ENCODE measurements at regions of chr11 and their contacts with region 1.

Region 1: DNA sequence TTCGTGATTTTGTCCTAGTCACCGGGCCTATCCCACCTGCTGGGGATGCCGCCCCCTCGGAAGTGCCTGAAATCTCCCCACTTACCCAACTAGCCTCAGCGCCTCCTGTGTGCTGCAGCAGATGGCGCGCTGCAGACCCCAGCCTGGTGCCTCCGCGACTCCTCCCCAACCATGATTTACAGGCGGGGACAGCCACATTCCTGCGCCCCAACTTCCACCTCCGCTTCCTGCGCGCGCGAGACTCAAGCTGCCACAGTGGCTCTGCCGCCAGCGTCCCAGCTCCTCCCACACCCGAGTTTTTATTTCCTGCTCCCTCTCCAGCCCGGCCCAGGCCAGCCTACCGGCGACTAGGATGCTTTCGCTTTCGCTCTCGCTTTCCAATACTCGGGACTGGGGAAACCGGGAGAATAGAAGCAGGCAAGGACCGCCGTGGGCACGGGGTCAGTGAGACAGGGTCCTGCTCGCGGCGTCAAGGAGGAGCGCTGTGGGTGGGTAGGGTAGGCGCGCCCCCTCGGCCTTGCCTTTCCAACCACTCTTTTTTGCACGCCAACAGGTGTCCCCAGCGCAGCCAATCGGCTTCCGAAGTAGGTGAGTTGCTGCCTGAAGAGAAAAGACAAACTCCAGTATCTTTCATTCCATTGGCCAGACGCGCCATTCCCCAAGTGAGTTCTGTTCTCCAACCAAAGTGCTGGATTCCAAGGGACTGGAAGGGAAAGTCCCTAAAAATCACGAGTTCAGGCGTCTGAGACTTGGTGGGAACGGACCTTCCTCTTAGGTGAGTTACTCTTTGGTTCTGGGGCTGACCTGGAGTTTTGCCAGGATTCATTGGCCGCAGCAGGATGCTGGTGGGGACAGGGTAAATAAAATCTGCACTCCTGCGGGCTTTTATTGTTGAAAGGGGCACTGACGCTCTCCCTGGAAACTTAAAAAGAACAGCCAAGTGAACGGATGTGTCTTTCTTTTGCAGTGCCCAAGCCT is at the start of gene FAM111A:
- DNase-seq: peak; percentile 64 to 74
- ATAC-seq: peak; percentile 85 to 88
- H3K4me3 ChIP-seq: peak within 1 kb of the TSS; percentile 68 to 90 (median 80)
- H3K27ac ChIP-seq: peak within 1 kb of the TSS; percentile 70 to 82 (median 80)
- H3K4me1 ChIP-seq: peaks cover 7 to 12% of the 10 kb centered on the region in 2 donors
- H3K27me3 ChIP-seq: no peaks in the 10 kb centered on the region
- CTCF ChIP-seq: no peak
- POLR2A ChIP-seq: peak in 1 of 2 donors; percentile 41
- total RNA-seq, gene FAM111A: 2.0 to 7.0 (median 3.7) TPM

Region 2: GRCh38 chr11:58567889-58568512 is 574.8 kb before region 1 on chr11:
- in situ Hi-C with region 1: loop called in 1 of 4 experiments (anchors 25 kb)
- intact Hi-C with region 1: no loop called
- DNase-seq: peak in 1 of 2 donors; percentile 23
- ATAC-seq: peak in 1 of 2 donors; percentile 82
- H3K4me3 ChIP-seq: no peak overlapping the region
- H3K27ac ChIP-seq: no peak overlapping the region
- H3K4me1 ChIP-seq: peaks cover 0 to 2% of the 10 kb centered on the region in 2 donors
- H3K27me3 ChIP-seq: no peaks in the 10 kb centered on the region
- CTCF ChIP-seq: peak; percentile 38 to 74 (median 57)
- POLR2A ChIP-seq: no peak

Region 3: GRCh38 chr11:58629857-58630256 is 513.0 kb before region 1 on chr11:
- in situ Hi-C with region 1: loop called in 1 of 4 experiments (anchors 25 kb)
- intact Hi-C with region 1: no loop called
- DNase-seq: no peak
- ATAC-seq: peak in 1 of 2 donors; percentile 37
- H3K4me3 ChIP-seq: no peak overlapping the region
- H3K27ac ChIP-seq: no peak overlapping the region
- H3K4me1 ChIP-seq: peaks cover 30 to 42% of the 10 kb centered on the region in 2 donors
- H3K27me3 ChIP-seq: no peaks in the 10 kb centered on the region
- CTCF ChIP-seq: peak in 4 of 5 experiments; percentile 25 to 49 (median 34)
- POLR2A ChIP-seq: no peak

Region 4: DNA sequence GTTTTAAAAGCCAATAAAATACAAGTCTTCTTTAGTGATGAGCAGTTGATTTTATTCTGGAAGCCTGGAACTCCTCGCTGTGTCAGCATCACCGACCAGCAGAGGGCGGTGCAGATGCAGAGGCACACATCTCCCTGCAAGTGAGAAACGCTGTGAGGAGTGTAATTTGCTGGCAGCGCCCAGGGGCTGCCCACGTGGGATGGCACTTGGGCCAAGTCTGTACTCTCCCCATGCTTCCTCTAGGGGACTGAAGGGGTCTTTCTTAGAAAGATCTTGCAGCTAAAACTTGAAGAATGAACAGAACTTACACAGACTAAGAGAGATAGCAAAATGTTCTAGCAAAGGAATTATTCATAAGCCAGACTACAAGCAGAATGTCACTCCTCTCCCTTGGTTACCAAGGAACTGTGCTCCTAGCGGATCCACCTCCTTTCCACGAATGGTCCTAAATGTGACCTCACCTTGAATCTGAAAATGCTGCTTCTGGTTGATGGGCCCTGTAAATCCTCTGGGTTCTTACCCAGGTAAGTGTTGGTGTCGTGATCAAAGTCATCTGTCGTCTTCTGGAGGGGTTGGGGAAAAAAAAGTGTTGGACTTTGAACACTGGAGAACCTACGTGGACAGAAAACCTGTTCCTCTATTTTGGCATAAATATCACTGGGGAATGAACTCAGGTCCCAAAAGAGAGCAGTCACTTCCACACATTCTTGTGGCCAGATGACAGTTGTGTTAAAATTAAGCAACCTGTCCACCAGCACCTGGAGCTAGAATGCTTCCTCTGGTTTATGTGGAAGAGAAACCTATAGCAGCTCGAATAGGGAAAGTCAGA is 488.5 kb before region 1 on chr11:
- in situ Hi-C with region 1: loop called in 3 of 4 experiments (anchors 25 kb)
- intact Hi-C with region 1: no loop called
- DNase-seq: peak; percentile 12 to 56
- ATAC-seq: peak; percentile 61 to 63
- H3K4me3 ChIP-seq: no peak overlapping the region
- H3K27ac ChIP-seq: no peak overlapping the region
- H3K4me1 ChIP-seq: no peaks in the 10 kb centered on the region
- H3K27me3 ChIP-seq: no peaks in the 10 kb centered on the region
- CTCF ChIP-seq: peak; percentile 52 to 82 (median 65)
- POLR2A ChIP-seq: no peak

Region 5: DNA sequence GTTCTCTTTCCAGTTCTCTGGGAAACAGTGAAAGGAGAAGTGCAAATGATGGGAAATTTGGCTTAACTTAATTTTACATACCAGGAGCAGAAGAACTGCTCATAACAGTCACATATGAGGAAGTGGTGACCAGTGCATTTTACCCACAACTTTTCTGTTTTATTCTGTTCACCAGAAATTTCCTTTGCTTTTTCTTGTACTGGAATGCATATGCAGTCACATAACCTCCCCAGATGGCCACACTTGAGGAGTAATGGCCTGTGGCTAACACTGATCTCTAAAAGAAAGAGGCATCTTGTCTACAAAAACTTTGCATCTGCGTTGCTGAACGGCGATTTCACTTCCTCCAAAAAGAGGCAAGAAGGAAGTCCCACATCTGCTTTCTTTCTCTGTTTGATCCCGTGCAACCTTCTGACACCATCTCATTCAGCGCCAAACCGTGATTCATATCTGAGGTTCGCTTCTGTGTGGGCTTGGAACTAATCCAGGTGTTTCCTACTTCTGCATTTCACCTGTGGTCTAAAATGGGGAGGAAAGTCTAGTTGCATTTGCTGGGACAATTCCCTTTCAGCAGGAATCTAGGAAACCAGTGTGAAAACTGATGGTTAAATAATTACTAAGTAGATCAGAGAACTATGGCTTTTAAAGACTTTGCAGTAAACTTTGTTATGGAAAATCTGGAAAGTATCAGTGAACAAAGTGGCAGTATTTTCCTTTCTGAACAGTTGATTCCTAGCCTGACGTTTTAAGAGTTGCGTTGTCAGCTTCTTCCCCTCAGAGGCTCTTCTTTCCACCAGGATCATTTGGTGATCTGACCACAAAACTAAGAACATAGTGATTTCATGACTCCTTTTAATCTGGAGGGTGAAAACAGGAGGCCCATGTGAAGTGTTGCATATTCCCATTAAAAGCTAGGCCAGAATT is 74.1 kb after region 1 on chr11:
- in situ Hi-C with region 1: no loop called
- intact Hi-C with region 1: no loop called
- DNase-seq: peak; percentile 23 to 47
- ATAC-seq: peak; percentile 55 to 61
- H3K4me3 ChIP-seq: no peak overlapping the region
- H3K27ac ChIP-seq: peak overlapping the region in 3 of 4 donors; percentile 2 to 34 (median 20)
- H3K4me1 ChIP-seq: peaks cover 0 to 10% of the 10 kb centered on the region in 2 donors
- H3K27me3 ChIP-seq: no peaks in the 10 kb centered on the region
- CTCF ChIP-seq: no peak
- POLR2A ChIP-seq: no peak

Region 6: GRCh38 chr11:59292611-59293010 is 149.8 kb after region 1 on chr11:
- in situ Hi-C with region 1: no loop called
- intact Hi-C with region 1: no loop called
- DNase-seq: no peak
- ATAC-seq: no peak
- H3K4me3 ChIP-seq: no peak overlapping the region
- H3K27ac ChIP-seq: no peak overlapping the region
- H3K4me1 ChIP-seq: no peaks in the 10 kb centered on the region
- H3K27me3 ChIP-seq: no peaks in the 10 kb centered on the region
- CTCF ChIP-seq: no peak
- POLR2A ChIP-seq: no peak

Region 7: GRCh38 chr11:59545179-59546020 is 402.6 kb after region 1 on chr11:
- in situ Hi-C with region 1: no loop called
- intact Hi-C with region 1: loop called (anchors 10 kb)
- DNase-seq: no peak
- ATAC-seq: no peak
- H3K4me3 ChIP-seq: no peak overlapping the region
- H3K27ac ChIP-seq: no peak overlapping the region
- H3K4me1 ChIP-seq: peaks cover 3 to 4% of the 10 kb centered on the region in 2 donors
- H3K27me3 ChIP-seq: no peaks in the 10 kb centered on the region
- CTCF ChIP-seq: no peak
- POLR2A ChIP-seq: no peak